MCF 10A (cell line): ENCODE measurements at regions of chr1 and their contacts with region 1.

Region 1: GRCh38 chr1:118304722-118305359 is 119.8 kb upstream of the SPAG17 start:
- DNase-seq: peak; percentile 31
- H3K4me3 Mint-ChIP-seq: no peak overlapping the region
- H3K27ac Mint-ChIP-seq: no peak overlapping the region
- H3K4me1 Mint-ChIP-seq: no peaks in the 10 kb centered on the region
- H3K27me3 Mint-ChIP-seq: no peaks in the 10 kb centered on the region
- CTCF ChIP-seq: peak; percentile 35

Region 2: DNA sequence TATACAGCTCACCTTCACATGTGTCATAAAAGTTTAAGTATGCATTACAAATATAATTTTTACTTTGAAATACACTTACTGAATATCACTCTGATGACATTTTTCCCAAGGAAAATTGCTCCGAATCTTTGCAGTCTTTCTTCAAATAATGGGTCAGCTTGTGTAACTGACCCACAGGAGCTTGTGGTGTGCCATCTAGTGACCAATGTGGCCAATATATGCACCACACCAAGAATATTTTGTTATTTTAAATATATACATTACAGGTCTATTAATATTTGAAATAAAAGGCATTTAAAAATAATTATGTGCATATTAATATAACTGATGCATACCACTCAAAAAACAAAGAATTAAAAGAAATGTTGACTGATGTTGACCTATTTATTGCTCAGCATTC is 411.9 kb after region 1 on chr1:
- CTCF ChIA-PET with region 1: interaction called, 4 read pairs
- POLR2A ChIA-PET with region 1: no interaction called
- intact Hi-C with region 1: loop called (anchors 2 kb)
- DNase-seq: peak; percentile 10
- H3K4me3 Mint-ChIP-seq: no peak overlapping the region
- H3K27ac Mint-ChIP-seq: no peak overlapping the region
- H3K4me1 Mint-ChIP-seq: no peaks in the 10 kb centered on the region
- H3K27me3 Mint-ChIP-seq: no peaks in the 10 kb centered on the region
- CTCF ChIP-seq: no peak